Sciatic nerve (tissue), 2 donors: ENCODE measurements at regions of chr1 and their contacts with region 1.

Region 1: DNA sequence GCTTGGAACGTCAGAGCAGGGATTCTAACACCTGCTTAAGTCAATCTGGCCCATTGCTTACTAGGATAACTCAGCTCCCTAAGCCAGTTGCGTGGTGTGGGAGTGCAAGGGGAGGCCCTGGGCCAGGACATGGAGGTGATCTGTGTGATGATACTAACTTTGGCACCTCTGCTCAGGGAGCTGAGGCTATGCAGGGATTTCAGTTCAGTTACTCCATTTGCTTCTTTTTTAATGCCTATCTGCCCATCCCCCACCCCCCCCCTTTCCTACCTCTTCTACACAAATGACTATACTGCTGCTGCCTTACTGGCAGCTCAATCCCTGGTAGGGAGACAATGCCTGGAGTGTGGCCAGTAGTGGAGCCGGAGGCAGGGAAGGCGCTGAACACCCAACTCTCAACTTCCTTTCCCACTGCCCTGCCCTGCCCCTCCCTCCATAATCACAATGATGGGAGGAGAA is 19.5 kb downstream of the INKA2 start:
- DNase-seq: no peak
- ATAC-seq: no peak

Region 2: DNA sequence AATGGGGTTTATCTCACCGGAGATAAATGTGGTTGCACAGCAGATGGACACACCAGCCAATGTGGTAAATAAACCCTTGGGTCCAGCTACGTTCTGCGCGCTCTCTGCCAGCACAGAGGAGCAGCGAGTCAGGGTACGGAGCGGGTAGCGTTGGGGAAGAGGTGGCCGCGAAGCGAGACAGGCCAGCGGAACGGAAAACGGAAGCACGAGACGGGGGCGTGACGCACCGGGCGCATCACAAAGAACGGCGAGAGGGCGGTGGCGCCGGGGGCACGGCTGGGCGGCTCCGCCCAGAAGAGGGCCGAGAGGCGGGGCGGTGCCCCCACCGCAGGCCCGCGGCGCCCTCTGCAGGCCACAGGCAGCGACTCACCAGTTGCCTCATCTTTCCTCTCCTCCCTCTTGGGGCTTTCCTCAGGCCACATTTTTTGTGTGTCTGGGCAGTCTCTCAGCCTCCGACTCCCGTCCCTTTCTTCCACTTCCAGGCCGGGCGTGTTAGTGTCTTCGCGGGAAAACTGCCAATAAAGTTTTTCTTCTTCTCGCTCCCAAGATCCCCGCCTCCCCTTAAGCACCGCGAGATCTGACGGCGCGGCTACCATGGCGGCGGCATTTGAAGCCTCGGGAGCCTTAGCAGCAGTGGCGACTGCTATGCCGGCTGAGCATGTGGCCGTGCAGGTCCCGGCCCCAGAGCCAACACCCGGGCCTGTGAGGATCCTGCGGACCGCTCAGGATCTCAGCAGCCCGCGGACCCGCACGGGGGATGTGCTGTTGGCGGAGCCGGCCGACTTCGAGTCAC is 35.8 kb after region 1 on chr1 and contains the start of gene DDX20:
- intact Hi-C with region 1: loop called (anchors 5 kb)
- DNase-seq: peak; percentile 96
- ATAC-seq: peak; percentile 99
- total RNA-seq, gene DDX20: 9.7 TPM